Caco-2 (cell line): ENCODE measurements at regions of chr16 and their contacts with region 1.

Region 1: GRCh38 chr16:46918861-46919792 is 35.0 kb downstream of the GPT2 start:
- DNase-seq: peak; percentile 73 to 78
- H3K4me3 ChIP-seq: no peak overlapping the region
- H3K4me3 Mint-ChIP-seq: no peak overlapping the region
- H3K27ac Mint-ChIP-seq: peak overlapping the region; percentile 21
- H3K4me1 ChIP-seq: peaks cover 18% of the 10 kb centered on the region
- H3K4me1 Mint-ChIP-seq: peaks cover 32% of the 10 kb centered on the region
- H3K27me3 ChIP-seq: no peaks in the 10 kb centered on the region
- H3K27me3 Mint-ChIP-seq: no peaks in the 10 kb centered on the region
- CTCF ChIP-seq: peak in 1 of 2 experiments; percentile 41

Region 2: GRCh38 chr16:46871587-46871986 is 47.5 kb before region 1 on chr16:
- CTCF ChIA-PET with region 1: interaction called, 6 read pairs
- POLR2A ChIA-PET with region 1: no interaction called
- intact Hi-C with region 1: loop called (anchors 1 kb)
- DNase-seq: no peak
- H3K4me3 ChIP-seq: no peak overlapping the region
- H3K4me3 Mint-ChIP-seq: no peak overlapping the region
- H3K27ac Mint-ChIP-seq: no peak overlapping the region
- H3K4me1 ChIP-seq: peaks cover 20% of the 10 kb centered on the region
- H3K4me1 Mint-ChIP-seq: peaks cover 19% of the 10 kb centered on the region
- H3K27me3 ChIP-seq: no peaks in the 10 kb centered on the region
- H3K27me3 Mint-ChIP-seq: no peaks in the 10 kb centered on the region
- CTCF ChIP-seq: no peak

Region 3: DNA sequence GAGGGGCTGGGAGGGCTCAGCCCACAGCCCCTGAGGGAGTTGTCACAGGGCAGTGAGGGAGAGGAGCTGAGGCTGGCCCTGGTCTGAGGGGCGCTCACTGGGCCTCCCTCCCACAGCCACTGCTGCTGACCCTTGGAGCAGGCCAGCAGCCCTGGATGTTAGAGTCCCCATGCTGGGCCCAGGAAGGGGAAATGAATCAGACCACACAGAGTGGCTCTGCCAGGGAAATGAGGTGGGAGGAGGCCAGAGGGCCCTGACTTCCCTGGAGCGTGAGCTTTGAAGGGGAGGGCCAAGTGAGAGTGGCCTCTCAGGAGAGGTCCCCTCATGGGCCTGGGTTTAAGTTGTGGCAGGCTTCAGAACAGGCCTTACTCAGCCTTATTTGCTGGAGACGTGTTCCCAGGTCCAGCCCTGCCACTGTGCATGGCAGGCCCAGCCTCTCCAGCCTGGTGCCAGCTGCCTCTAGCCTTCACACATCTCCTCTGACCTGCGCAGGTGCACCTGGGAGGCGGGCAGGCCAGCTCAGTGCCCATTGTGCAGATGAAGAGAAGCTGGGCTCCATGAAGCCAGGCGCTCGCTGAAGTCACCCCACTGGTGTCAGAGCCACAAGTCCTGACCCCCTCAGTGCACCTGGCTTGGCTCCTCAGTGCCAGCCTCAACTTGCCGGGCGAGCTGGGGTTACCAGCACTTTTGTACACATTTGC is 19.5 kb before region 1 on chr16:
- CTCF ChIA-PET with region 1: interaction called, 11 read pairs
- POLR2A ChIA-PET with region 1: no interaction called
- intact Hi-C with region 1: no loop called
- DNase-seq: no peak
- H3K4me3 ChIP-seq: no peak overlapping the region
- H3K4me3 Mint-ChIP-seq: no peak overlapping the region
- H3K27ac Mint-ChIP-seq: no peak overlapping the region
- H3K4me1 ChIP-seq: peaks cover 18% of the 10 kb centered on the region
- H3K4me1 Mint-ChIP-seq: peaks cover 8% of the 10 kb centered on the region
- H3K27me3 ChIP-seq: no peaks in the 10 kb centered on the region
- H3K27me3 Mint-ChIP-seq: no peaks in the 10 kb centered on the region
- CTCF ChIP-seq: no peak